ENCODE measurements at regions of chr13 and their contacts with region 1.

Region 1: GRCh38 chr13:53220038-53220437 is 191.4 kb downstream of the OLFM4 start:
- DNase-seq: no peak
- CTCF ChIP-seq: no peak

Region 2: DNA sequence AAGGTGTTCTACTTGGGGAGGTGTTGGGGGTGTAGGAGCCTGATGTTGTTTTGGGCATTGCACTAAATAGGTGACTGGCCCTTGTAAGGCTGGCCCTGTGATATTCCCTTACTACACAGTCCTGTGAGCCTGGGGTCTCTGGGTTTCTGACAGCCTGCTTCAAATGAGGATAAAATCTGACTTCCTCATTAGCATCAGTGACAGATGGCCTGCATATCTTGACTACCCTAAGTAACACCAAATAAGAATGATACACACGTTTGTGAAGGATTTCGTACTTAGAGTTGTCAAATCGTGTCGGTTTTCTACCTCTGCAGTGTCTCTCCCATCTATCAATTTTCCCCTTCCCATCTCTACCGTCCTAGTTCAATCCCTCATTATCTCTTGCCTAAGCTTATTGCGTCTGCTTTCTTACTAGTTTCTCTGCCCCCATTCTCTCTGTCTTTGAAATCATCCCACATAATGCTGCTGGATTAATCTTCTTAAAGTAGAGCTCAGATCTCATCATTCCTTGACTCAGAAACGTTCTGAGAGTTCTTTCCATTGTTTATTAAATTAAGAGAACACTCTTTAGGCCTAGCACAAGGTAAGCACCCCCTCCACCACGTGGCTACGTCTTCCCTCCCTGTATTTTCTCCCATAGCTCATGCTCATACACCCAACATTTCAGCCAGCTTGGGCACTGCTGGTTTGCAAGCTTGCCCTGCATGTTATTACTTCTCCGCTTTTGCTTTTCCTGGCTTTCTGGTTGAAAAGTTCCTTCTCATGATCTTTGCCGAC is 454.2 kb before region 1 on chr13:
- CTCF ChIA-PET with region 1: no interaction called
- POLR2A ChIA-PET with region 1: no interaction called
- DNase-seq: no peak
- CTCF ChIP-seq: no peak

Region 3: DNA sequence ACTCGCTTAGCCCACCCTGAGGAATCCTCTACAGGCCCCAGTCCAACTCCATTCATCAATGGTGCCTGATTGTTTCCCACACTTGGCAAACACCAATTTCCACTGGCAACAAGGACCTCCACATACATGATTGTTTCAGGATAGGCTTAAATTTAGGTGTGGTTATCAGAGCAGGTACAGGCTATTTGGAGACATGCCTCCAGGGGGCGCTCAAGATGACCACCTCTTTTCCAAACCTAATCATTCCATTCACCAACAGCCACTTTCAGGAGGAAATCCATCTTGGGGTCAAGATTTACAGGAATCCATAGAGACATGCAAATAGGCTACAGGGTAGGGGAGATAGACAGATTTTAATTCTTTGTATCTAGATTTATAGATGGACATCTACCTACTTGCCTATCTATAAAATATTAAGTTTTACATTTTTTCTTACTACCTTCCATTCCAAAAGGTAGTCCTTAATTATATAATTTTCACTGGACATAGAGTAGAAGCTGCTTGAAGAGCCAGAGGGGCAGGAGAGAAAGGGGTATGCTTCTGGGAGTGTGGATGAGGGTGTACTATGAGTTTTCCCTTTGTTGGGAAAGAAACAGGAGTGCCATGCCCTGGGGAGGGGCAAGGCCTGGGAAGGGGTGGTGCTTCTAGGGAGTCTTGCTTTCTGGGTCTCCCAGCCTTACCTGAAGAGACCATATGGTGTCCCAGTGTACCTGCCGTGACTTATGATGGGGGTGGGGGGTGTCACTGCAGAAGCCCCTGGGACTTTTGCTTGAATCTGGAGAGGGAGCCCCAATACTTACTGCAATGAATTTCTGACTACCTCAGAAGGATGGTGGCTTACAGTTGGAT is 357.5 kb before region 1 on chr13:
- CTCF ChIA-PET with region 1: no interaction called
- POLR2A ChIA-PET with region 1: no interaction called
- DNase-seq: peak; percentile 43
- CTCF ChIP-seq: peak; percentile 33

Region 4: GRCh38 chr13:53206455-53206854 is 13.6 kb before region 1 on chr13:
- CTCF ChIA-PET with region 1: interaction called, 11 read pairs
- POLR2A ChIA-PET with region 1: no interaction called
- DNase-seq: no peak
- CTCF ChIP-seq: peak; percentile 26